ENCODE measurements at regions of chr9 and their contacts with region 1.

Region 1: DNA sequence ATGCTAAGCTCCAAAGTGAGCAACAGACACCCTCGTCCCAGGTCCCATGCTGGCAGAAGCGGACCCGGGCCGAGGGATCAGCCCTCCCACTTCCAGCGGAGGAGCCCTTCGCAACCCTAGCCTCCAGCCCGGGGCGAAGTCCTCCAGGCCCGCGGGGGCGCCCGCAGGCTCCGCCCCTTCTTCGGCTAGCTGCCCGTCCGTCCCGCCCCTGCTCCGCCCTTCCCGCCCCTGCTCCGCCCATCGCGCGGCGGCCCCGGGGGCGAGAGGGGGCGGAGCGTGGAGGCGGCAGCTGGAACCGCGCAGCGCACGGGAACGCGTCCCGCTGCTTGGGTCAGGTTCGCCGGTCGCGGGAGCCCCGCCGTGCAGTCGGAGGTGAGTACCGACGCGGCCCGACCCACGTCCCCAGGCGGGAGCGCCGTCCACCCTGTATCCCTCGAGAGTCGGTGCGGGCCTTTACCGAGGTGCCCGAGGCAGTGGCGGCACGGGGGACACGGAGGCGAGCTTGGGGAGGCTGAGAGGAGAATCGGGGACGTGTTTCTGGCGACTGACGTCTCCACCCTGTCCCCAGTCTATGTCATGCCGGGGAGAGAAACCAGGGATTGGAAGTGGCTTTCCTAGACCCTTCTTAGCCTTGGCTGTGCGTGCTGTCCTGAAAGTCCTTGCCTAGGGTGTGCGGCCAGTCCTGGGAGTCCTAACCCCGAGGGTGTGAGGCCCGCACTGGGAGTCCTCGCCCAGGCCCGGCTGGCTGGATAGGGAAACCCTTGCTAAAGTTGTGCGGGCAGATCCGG is at the start of gene ACO1:
- DNase-seq: peak; percentile 92
- H3K4me3 ChIP-seq: peak within 1 kb of the TSS; percentile 11 to 65 (median 52)
- H3K27ac ChIP-seq: peak within 1 kb of the TSS; percentile 70 to 77 (median 73)
- H3K4me1 ChIP-seq: peaks cover 5 to 30% of the 10 kb centered on the region in 2 donors
- H3K27me3 ChIP-seq: no peaks in the 10 kb centered on the region
- CTCF ChIP-seq: no peak
- POLR2A ChIP-seq: peak; percentile 55 to 95
- total RNA-seq, gene ACO1: 44.6 to 57.6 (median 45.3) TPM

Region 2: DNA sequence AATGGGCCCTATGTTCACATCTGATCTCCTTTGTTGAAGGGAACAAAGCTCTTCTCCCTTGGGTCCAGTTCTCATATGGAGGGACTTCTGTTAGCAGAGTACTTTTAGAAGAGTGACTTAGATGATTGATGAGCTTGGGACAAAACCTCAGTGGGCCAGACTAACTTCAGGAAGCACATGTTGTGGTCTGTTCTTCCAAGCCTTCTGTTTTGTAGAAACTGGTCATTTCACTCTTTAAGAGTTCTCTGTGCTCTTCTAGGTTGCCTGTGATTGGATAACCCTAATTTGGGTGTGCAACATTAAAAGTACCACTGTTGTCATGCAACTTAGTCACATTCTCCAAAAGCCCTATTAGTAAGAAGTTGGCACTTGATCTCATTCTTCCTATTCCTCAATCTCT is 183.7 kb before region 1 on chr9:
- intact Hi-C with region 1: no loop called
- DNase-seq: no peak
- H3K4me3 ChIP-seq: no peak overlapping the region
- H3K27ac ChIP-seq: no peak overlapping the region
- H3K4me1 ChIP-seq: no peaks in the 10 kb centered on the region
- H3K27me3 ChIP-seq: no peaks in the 10 kb centered on the region
- CTCF ChIP-seq: no peak
- POLR2A ChIP-seq: no peak

Region 3: DNA sequence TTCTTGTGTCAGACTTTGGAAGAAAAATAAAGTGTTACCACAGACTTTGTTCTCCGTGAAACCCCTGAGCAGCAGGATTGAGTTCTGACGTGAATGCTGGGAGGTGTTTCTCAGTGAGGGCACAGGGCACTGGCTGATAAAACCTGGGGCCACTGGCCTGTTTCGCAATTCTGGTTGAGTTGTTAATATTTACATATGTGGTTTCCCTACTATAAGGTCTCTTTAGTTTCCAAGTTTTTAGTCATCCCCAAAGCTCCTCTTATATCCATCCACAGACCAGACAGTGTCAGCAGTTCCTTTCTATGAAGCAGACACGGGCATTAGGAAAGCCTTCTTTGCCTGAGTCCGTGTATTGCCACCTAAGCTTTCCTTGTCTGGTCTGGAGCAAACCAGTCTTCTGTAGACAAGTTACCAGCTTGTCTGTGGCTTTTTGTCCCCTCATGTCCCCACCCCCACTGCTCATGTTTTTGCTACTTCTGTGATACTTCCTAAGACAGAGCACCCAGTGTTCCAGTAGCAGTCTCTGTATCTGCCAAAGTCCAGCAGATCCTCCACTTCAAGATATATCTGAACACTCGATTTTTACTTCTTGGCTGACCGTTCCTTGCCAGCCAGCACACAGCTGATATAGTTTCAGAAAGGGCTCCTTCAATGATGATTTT is 41.9 kb after region 1 on chr9:
- intact Hi-C with region 1: loop called (anchors 5 kb)
- DNase-seq: no peak
- H3K4me3 ChIP-seq: no peak overlapping the region
- H3K27ac ChIP-seq: no peak overlapping the region
- H3K4me1 ChIP-seq: no peaks in the 10 kb centered on the region
- H3K27me3 ChIP-seq: no peaks in the 10 kb centered on the region
- CTCF ChIP-seq: no peak
- POLR2A ChIP-seq: no peak

Region 4: GRCh38 chr9:32571969-32572899 is 187.7 kb after region 1 on chr9:
- intact Hi-C with region 1: loop called (anchors 2 kb)
- DNase-seq: peak; percentile 65 to 71
- H3K4me3 ChIP-seq: peak overlapping the region; percentile 76 to 82 (median 81)
- H3K27ac ChIP-seq: peak overlapping the region; percentile 65 to 89 (median 83)
- H3K4me1 ChIP-seq: peaks cover 12 to 20% of the 10 kb centered on the region in 2 donors
- H3K27me3 ChIP-seq: no peaks in the 10 kb centered on the region
- CTCF ChIP-seq: peak in 5 of 6 experiments; percentile 38 to 68 (median 53)
- POLR2A ChIP-seq: no peak

Measured in thyroid gland (tissue), 4 donors.